IMR-90 (cell line): ENCODE measurements at regions of chr10 and their contacts with region 1.

Region 1: DNA sequence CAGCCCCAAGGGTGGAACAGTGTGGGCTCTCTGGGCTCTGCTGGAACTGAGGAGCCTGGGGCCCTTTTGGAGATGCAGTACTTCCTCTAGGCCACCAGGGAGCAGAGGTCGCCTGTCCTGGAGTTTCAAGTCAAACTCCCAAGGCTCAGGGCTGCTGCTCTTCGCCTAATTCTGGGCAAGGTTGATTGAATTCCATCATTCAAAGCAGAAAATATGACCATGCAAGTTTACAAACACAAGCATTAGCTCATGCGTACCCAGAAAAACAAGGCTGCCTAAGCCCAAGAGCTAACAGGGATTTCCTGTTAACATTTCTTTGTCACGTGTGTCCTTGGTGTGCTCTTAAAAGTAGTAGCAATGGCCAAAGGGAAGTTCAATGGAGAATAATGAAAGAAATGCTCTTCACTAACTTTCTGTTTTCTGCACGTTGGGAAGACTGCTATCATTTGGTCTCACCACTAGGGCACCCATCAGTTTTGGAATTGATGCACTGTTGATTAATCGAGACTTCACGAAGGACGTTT is 20.1 kb downstream of the LDB3 start:
- DNase-seq: peak; percentile 70
- ATAC-seq: peak; percentile 83
- H3K4me3 ChIP-seq: no peak overlapping the region
- H3K27ac ChIP-seq: peak overlapping the region; percentile 92
- H3K4me1 ChIP-seq: peaks cover 29% of the 10 kb centered on the region
- H3K27me3 ChIP-seq: no peaks in the 10 kb centered on the region
- CTCF ChIP-seq: peak; percentile 80
- POLR2A ChIP-seq: no peak
- RAD21 ChIP-seq: peak; percentile 84

Region 2: GRCh38 chr10:86521678-86522509 is 166.6 kb before region 1 on chr10 and contains the start of gene WAPL:
- CTCF ChIA-PET with region 1: no interaction called
- POLR2A ChIA-PET with region 1: no interaction called
- dilution Hi-C with region 1: no loop called
- in situ Hi-C with region 1: no loop called
- intact Hi-C with region 1: loop called (anchors 1 kb)
- DNase-seq: peak; percentile 90
- ATAC-seq: peak; percentile 98
- H3K4me3 ChIP-seq: peak within 1 kb of the TSS; percentile 68
- H3K27ac ChIP-seq: peak within 1 kb of the TSS; percentile 81
- H3K4me1 ChIP-seq: no peaks in the 10 kb centered on the region; the same call in 1 of the 2 replicates
- H3K27me3 ChIP-seq: no peaks in the 10 kb centered on the region
- CTCF ChIP-seq: no peak
- POLR2A ChIP-seq: no peak
- RAD21 ChIP-seq: no peak
- total RNA-seq, gene WAPL: 31.7 and 49.4 TPM in 2 replicates

Region 3: DNA sequence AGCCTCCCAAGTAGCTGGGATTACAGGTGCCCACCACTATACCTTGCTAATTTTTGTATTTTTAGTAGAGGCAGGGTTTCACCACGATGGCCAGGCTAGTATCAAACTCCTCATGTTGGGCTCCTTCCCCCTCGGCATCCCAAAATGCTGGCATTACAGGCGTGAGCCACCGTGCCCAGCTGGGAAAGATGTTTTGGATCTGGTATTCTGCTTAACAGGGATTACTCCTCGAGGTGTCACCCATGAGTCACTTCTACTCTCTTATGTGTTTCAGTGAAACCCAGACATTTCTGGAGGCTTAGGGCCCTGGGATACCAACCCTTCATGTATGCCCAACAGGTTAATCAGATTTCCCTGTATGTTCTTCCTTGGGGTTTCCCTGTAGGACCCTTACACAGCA is 46.0 kb before region 1 on chr10:
- CTCF ChIA-PET with region 1: interaction called, 5 read pairs
- POLR2A ChIA-PET with region 1: no interaction called
- dilution Hi-C with region 1: no loop called
- in situ Hi-C with region 1: no loop called
- intact Hi-C with region 1: loop called (anchors 1 kb)
- DNase-seq: peak; percentile 64
- ATAC-seq: peak; percentile 87
- H3K4me3 ChIP-seq: no peak overlapping the region
- H3K27ac ChIP-seq: no peak overlapping the region
- H3K4me1 ChIP-seq: peaks cover 6% of the 10 kb centered on the region
- H3K27me3 ChIP-seq: no peaks in the 10 kb centered on the region
- CTCF ChIP-seq: peak; percentile 32; the same call in 1 of the 2 replicates
- POLR2A ChIP-seq: no peak
- RAD21 ChIP-seq: peak; percentile 28; the same call in 1 of the 2 replicates

Region 4: GRCh38 chr10:86899670-86900276 is 211.3 kb after region 1 on chr10:
- CTCF ChIA-PET with region 1: interaction called, 12 read pairs
- POLR2A ChIA-PET with region 1: interaction called, 6 read pairs
- dilution Hi-C with region 1: no loop called
- in situ Hi-C with region 1: no loop called
- intact Hi-C with region 1: loop called (anchors 1 kb)
- DNase-seq: peak; percentile 71
- ATAC-seq: peak; percentile 81
- H3K4me3 ChIP-seq: no peak overlapping the region
- H3K27ac ChIP-seq: no peak overlapping the region
- H3K4me1 ChIP-seq: peaks cover 2% of the 10 kb centered on the region
- H3K27me3 ChIP-seq: no peaks in the 10 kb centered on the region
- CTCF ChIP-seq: peak; percentile 74
- POLR2A ChIP-seq: no peak
- RAD21 ChIP-seq: peak; percentile 77

Region 5: DNA sequence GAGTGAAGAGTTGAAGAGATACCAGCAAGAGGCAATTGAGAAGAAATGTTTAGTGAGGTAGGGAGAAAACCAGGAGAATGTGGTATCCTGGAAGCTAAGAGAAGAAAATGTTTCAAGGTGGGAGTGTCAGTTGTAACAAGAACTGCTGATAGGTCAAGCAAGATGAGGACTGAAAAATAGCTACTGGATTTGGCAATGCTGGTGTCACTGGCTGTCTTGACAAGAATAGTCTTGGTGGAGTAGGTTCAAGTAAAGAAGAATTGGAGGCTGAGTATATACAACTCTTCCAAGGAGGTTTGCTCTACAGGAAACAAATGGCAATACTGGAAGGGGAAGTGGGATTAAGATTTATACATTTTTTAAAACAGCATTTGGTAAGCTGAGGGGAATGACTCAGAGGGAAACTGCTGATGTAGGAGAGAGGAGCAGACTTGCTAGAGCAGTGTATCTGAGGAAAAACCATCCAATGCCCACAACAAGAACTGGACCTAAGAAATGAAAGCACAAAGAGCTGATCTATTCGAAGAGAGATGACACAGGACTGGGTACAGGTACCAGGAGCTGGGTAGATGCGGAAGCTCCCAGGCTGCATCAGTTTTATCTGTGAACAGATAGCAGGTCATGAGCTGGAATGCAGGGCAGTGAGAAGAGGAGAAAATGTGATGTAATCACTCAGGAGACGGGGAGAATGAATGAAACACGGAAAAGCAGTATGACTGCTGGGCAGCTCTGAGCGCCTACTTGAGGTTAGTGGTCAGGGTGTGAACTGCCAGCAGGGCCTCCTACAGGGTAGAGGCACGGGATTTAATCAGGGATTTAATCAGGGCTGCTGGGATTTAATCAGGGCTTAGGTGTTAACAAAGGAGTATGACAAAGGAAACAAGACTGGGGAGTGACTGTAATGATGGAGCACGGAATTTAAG is 366.2 kb after region 1 on chr10:
- CTCF ChIA-PET with region 1: no interaction called
- POLR2A ChIA-PET with region 1: no interaction called
- dilution Hi-C with region 1: no loop called
- in situ Hi-C with region 1: no loop called
- intact Hi-C with region 1: loop called (anchors 1 kb)
- DNase-seq: peak; percentile 85
- ATAC-seq: peak; percentile 95
- H3K4me3 ChIP-seq: no peak overlapping the region
- H3K27ac ChIP-seq: peak overlapping the region; percentile 44
- H3K4me1 ChIP-seq: peaks cover 9% of the 10 kb centered on the region
- H3K27me3 ChIP-seq: no peaks in the 10 kb centered on the region
- CTCF ChIP-seq: peak; percentile 46
- POLR2A ChIP-seq: no peak
- RAD21 ChIP-seq: peak; percentile 56